Testis (tissue), 5 donors: ENCODE measurements at regions of chr7 and their contacts with region 1.

Region 1: GRCh38 chr7:55409482-55410225 is 44.5 kb downstream of the LANCL2 start:
- DNase-seq: no peak
- H3K4me3 ChIP-seq: no peak overlapping the region
- H3K27ac ChIP-seq: no peak overlapping the region
- H3K4me1 ChIP-seq: peaks cover 7% of the 10 kb centered on the region
- H3K27me3 ChIP-seq: no peaks in the 10 kb centered on the region
- CTCF ChIP-seq: no peak
- POLR2A ChIP-seq: no peak

Region 2: GRCh38 chr7:55224111-55224510 is 185.5 kb before region 1 on chr7:
- intact Hi-C with region 1: no loop called
- DNase-seq: no peak
- H3K4me3 ChIP-seq: no peak overlapping the region
- H3K27ac ChIP-seq: no peak overlapping the region
- H3K4me1 ChIP-seq: no peaks in the 10 kb centered on the region
- H3K27me3 ChIP-seq: no peaks in the 10 kb centered on the region
- CTCF ChIP-seq: no peak
- POLR2A ChIP-seq: no peak

Region 3: DNA sequence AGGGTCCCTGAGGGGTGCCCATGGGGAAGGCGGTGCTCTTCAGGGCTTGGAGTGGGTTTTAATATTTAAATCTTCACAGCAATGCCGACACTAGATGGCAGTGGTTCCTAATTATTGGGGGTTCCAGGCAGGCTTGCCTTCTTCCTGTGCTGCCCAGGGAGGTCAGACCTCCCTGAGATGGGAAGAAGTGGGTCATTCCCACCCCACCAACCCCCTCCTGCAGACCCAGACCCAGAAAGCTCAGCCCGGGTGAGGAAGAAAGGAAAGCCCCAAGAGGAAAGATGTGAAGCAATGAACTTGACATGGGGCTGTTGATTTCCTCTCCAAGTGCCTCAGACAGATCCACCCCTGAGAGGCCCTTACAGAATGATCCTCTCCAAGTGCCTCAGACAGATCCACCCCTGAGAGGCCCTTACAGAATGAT is 129.6 kb before region 1 on chr7:
- intact Hi-C with region 1: loop called (anchors 5 kb)
- DNase-seq: peak; percentile 82
- H3K4me3 ChIP-seq: no peak overlapping the region
- H3K27ac ChIP-seq: no peak overlapping the region
- H3K4me1 ChIP-seq: peaks cover 3% of the 10 kb centered on the region
- H3K27me3 ChIP-seq: no peaks in the 10 kb centered on the region
- CTCF ChIP-seq: peak; percentile 24 to 60 (median 52)
- POLR2A ChIP-seq: no peak

Region 4: GRCh38 chr7:55464422-55464821 is 54.8 kb after region 1 on chr7:
- intact Hi-C with region 1: no loop called
- DNase-seq: no peak
- H3K4me3 ChIP-seq: no peak overlapping the region
- H3K27ac ChIP-seq: no peak overlapping the region
- H3K4me1 ChIP-seq: no peaks in the 10 kb centered on the region
- H3K27me3 ChIP-seq: no peaks in the 10 kb centered on the region
- CTCF ChIP-seq: no peak
- POLR2A ChIP-seq: no peak